ENCODE measurements at regions of chr2 and their contacts with region 1.

Region 1: DNA sequence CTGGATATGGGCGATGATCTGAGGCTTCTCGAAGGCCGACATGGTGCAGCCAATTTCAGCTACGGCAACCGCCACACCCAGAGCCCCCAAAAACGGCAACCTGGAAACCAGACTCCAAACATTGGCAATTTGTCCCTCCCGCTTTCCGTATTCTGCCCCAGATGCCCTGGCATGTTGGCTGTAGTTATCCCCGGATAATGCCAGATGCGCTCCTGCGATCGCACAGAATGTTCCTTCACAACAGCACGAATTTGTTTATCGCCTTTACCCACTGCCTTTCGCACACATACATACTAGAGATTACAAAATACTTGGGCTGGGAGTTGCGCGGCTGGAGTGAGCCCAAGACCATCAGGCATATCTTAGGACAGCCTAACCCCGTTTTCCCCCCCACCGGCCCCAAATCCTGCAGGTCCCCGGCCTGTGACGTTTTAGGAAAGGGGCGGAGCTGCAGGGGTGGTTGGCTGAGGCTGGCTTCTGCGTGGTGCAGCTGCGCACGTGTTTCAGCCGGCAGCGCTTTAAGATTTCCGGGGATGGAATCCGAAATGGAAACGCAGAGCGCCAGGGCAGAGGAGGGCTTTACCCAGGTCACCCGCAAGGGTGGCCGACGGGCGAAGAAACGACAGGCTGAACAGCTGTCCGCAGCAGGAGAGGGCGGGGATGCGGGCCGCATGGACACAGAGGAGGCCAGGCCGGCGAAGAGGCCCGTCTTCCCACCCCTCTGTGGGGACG is at the start of gene PNO1:
- DNase-seq: peak; percentile 86
- ATAC-seq: peak; percentile 96
- H3K4me3 ChIP-seq: peak within 1 kb of the TSS; percentile 98
- H3K27ac ChIP-seq: peak within 1 kb of the TSS; percentile 97
- H3K4me1 ChIP-seq: peaks cover 10% of the 10 kb centered on the region
- H3K27me3 ChIP-seq: no peaks in the 10 kb centered on the region
- CTCF ChIP-seq: no peak
- EP300 ChIP-seq: no peak; a peak in 1 of 4 replicates
- POLR2A ChIP-seq: peak; percentile 81
- RAD21 ChIP-seq: no peak
- polyA plus RNA-seq, gene PNO1: 9.7 to 18.5 TPM

Region 2: DNA sequence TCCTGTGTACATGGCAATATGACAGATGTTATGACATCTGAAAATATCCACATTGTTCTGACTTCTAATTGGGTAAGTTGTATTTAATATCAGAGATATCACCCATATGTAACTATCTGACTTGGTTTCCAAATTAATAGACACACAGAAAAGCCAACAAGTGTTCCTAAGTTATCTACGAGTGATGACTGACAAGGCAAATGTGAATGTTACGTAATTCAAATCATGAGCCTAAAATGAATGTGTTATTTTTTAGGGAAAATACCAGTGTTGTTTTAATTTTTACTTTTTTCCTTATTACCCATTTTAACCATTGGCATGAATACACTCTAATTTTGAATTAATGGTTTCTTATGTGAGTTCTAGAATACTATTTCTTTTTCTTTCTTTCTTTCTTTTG is 15.7 kb before region 1 on chr2:
- CTCF ChIA-PET with region 1: interaction called, 7 read pairs
- POLR2A ChIA-PET with region 1: interaction called, 5 read pairs
- RAD21 ChIA-PET with region 1: no interaction called
- SMC1A ChIA-PET with region 1: interaction called, 10 read pairs
- in situ Hi-C with region 1: no loop called
- intact Hi-C with region 1: no loop called
- DNase-seq: no peak
- ATAC-seq: no peak
- H3K4me3 ChIP-seq: no peak overlapping the region
- H3K27ac ChIP-seq: no peak overlapping the region
- H3K4me1 ChIP-seq: no peaks in the 10 kb centered on the region
- H3K27me3 ChIP-seq: no peaks in the 10 kb centered on the region
- CTCF ChIP-seq: no peak
- EP300 ChIP-seq: no peak
- POLR2A ChIP-seq: no peak
- RAD21 ChIP-seq: no peak

Region 3: DNA sequence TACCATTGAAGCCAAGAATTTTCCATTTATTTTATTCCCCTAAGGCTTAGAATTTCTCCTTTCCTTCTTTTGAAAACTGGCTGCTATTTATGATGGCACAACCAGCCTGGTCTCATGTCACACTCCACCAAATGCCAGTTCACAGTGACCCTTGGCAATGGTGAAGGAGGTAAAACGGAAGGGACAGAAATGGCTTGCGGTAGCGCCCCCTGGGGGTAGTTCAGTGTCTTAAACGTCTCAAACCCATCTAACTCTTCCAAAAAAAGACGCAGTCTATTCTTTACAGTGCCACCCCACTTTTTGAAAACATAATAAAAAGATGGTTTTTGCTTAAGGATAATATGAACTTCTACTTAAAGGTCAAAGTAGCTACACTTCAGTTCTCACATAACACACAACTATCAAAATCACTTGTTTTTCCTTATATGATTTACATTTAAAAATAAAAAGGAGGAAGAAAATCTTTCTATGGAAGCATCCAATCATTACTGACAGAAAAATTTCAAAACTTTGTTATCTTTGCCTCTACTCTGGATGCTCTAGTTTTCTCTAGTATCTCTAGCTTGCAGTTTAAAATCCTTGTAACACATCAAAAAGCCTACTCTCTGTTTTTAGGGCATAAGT is 28.1 kb after region 1 on chr2:
- CTCF ChIA-PET with region 1: interaction called, 19 read pairs
- POLR2A ChIA-PET with region 1: no interaction called
- RAD21 ChIA-PET with region 1: no interaction called
- SMC1A ChIA-PET with region 1: interaction called, 3 read pairs
- in situ Hi-C with region 1: no loop called
- intact Hi-C with region 1: no loop called
- DNase-seq: peak; percentile 28
- ATAC-seq: peak; percentile 94
- H3K4me3 ChIP-seq: no peak overlapping the region
- H3K27ac ChIP-seq: no peak overlapping the region; the same call in 1 of the 2 replicates
- H3K4me1 ChIP-seq: no peaks in the 10 kb centered on the region
- H3K27me3 ChIP-seq: no peaks in the 10 kb centered on the region
- CTCF ChIP-seq: peak; percentile 55 to 80 (median 80)
- EP300 ChIP-seq: no peak
- POLR2A ChIP-seq: no peak
- RAD21 ChIP-seq: peak; percentile 49